ENCODE measurements at regions of chr6 and their contacts with region 1.

Region 1: DNA sequence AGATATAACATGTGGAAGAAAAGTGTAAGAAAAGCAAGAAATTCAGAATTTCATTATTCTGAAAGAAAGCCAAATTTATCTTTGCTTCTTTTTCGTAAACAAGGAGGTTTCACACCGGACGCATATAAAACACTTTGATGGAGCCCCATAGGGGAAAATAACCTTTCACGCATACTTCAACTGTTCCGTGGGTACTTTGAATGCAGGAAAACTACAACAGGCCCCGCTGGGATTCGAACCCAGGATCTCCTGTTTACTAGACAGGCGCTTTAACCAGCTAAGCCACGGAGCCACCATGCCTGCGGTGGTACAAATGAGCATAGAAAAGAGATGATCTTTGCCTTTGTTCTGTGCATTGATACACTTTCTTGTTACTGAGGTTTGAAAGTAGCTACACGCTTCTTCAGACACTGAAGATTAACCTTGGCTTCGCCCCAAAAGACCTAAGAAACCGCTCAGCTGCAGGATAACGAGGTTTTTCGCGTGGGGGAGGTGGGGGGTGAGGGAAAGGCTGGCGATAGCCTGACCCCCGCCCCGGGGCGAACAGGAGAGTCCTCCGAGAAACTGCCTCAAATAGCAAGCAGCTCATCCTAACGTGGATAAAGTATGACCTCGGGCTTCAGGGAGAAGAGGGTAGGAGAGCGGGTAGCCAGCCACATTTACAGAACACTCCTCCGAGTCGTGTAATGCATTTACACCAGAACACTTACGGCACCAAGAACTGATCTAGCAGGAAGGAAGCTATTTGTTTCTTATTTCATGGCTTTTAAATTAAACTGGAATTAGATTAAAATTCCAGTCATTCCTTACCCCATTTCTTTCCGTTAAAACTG is 5.3 kb upstream of the HMGN4 start:
- DNase-seq: peak; percentile 94
- H3K4me3 Mint-ChIP-seq: peak overlapping the region; percentile 96
- H3K27ac Mint-ChIP-seq: peak overlapping the region; percentile 82
- H3K4me1 Mint-ChIP-seq: peaks cover 21% of the 10 kb centered on the region
- H3K27me3 Mint-ChIP-seq: no peaks in the 10 kb centered on the region
- CTCF ChIP-seq: no peak

Region 2: GRCh38 chr6:26329763-26330511 is 203.0 kb before region 1 on chr6:
- CTCF ChIA-PET with region 1: no interaction called
- POLR2A ChIA-PET with region 1: interaction called, 16 read pairs
- intact Hi-C with region 1: no loop called
- DNase-seq: peak; percentile 73
- H3K4me3 Mint-ChIP-seq: peak overlapping the region; percentile 75
- H3K27ac Mint-ChIP-seq: peak overlapping the region; percentile 63
- H3K4me1 Mint-ChIP-seq: peaks cover 12% of the 10 kb centered on the region
- H3K27me3 Mint-ChIP-seq: no peaks in the 10 kb centered on the region
- CTCF ChIP-seq: no peak

Region 3: DNA sequence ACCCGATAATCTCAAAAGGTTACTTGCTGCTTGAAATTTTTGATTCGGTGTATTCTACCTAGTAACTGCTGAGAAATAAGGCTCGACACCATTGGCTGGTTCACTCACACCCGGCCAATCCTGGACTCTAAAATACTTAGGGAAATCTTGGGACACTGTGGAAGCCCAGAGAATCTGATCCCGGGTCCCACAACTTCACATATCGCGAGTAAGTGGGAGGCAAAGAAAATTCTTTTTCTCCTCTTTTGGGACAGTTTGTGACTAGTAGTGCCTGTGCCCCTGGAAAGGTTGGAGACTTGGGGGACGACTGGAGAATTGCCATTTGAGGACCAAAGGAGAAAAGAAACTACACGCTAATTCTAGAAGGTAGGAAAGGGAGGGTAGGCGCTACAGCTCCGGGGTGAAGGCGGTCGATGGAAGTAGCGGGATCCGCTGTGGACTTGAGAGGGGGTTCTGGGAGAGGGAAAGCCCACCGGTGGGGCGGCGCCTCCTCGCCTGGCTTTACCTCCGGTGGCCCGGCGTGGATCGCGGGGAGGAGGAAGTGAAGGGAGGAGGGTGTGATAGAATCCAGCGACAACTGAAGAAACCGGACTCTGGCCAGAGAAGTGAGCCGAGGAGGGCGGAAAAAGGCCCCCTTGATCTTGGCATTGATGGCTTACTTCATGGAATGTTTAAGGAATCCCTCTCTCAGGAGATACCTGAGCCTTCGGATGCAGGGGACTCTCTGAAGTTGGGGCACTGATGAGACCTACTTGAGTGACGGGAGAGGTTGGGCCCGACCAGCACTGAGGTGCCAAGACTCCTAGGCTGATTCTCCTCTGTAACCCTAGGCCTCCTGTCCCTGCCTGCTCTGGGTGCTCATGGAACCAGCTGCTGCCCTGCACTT is 111.4 kb before region 1 on chr6:
- CTCF ChIA-PET with region 1: no interaction called
- POLR2A ChIA-PET with region 1: interaction called, 3 read pairs
- intact Hi-C with region 1: loop called (anchors 5 kb)
- DNase-seq: peak; percentile 93
- H3K4me3 Mint-ChIP-seq: no peak overlapping the region
- H3K27ac Mint-ChIP-seq: no peak overlapping the region
- H3K4me1 Mint-ChIP-seq: peaks cover 29% of the 10 kb centered on the region
- H3K27me3 Mint-ChIP-seq: no peaks in the 10 kb centered on the region
- CTCF ChIP-seq: no peak

Region 4: GRCh38 chr6:26473758-26474438 is 59.0 kb before region 1 on chr6:
- CTCF ChIA-PET with region 1: no interaction called
- POLR2A ChIA-PET with region 1: interaction called, 17 read pairs
- intact Hi-C with region 1: loop called (anchors 5 kb)
- DNase-seq: peak; percentile 94
- H3K4me3 Mint-ChIP-seq: peak overlapping the region; percentile 92
- H3K27ac Mint-ChIP-seq: peak overlapping the region; percentile 99
- H3K4me1 Mint-ChIP-seq: peaks cover 21% of the 10 kb centered on the region
- H3K27me3 Mint-ChIP-seq: no peaks in the 10 kb centered on the region
- CTCF ChIP-seq: no peak

Region 5: DNA sequence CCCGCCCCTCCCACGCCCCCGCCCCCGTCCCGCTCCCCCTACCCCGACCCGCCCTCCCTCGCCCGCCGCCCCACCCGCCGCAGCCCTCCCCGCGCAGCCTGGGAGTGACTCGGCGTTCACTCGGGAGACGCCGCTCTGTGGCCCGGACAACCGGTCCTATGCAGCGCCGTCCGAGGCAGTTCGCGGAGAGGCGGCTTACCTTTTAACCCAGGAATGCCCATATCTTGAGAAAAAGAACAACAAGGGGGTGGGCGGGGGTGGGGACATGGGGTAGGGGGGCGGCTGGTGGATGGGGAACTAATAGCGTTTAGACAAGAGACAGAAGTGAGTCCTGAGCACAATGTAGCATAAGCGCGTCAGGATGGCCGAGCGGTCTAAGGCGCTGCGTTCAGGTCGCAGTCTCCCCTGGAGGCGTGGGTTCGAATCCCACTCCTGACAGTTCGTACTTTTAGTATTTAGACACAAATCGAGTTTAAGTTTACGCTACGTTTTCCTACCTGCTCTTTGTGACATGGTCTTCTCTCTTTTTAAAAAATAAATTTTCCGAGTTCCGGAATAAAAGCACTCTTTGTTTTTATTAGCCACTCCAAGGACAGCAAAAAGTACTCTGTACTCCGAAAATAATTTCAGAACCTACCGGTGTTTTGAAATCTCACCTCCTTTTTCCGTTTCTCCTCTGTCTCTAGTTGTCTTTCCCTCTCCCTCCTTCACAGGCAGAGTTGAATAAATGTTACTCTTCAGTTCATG is 11.9 kb before region 1 on chr6:
- CTCF ChIA-PET with region 1: interaction called, 4 read pairs
- POLR2A ChIA-PET with region 1: interaction called, 45 read pairs
- intact Hi-C with region 1: loop called (anchors 1 kb)
- DNase-seq: peak; percentile 82
- H3K4me3 Mint-ChIP-seq: peak overlapping the region; percentile 66
- H3K27ac Mint-ChIP-seq: peak overlapping the region; percentile 17
- H3K4me1 Mint-ChIP-seq: peaks cover 9% of the 10 kb centered on the region
- H3K27me3 Mint-ChIP-seq: no peaks in the 10 kb centered on the region
- CTCF ChIP-seq: no peak

Region 6: DNA sequence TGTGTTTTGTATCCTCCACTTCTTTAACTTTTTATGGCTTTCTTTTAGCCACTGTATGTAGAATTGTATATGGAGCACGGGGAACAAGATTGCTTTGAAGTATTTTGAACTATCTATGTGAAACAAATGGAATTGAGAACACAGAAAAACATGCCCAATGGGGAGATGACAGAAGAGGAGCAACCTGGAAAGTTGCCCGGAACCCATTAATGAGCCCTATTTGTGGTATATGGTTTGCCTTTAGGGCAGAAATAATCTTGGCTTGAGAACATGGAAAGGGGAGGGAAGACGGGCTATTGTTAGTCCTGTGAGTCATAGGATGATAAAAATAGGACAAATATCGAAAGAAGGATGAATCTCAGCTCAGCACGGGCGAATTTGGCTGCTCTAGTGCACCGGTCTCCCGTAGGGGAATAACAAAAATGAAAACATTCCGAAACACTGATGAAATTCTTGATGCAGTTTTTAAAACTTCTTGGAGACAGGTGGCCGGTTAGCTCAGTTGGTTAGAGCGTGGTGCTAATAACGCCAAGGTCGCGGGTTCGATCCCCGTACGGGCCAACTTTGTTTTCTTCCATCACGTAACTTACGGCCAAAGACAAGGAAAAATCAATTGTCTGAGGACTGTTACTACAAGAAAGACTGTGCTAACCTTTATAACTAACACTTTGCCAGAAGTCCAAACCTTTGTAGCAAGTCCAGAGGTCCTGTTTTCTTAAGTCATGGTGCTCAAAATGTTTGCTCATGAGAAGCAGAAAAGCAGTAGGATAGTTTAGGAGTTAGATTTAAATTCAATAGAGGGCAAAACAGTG is 20.9 kb after region 1 on chr6:
- CTCF ChIA-PET with region 1: interaction called, 4 read pairs
- POLR2A ChIA-PET with region 1: interaction called, 76 read pairs
- intact Hi-C with region 1: loop called (anchors 1 kb)
- DNase-seq: peak; percentile 95
- H3K4me3 Mint-ChIP-seq: no peak overlapping the region
- H3K27ac Mint-ChIP-seq: no peak overlapping the region
- H3K4me1 Mint-ChIP-seq: peaks cover 21% of the 10 kb centered on the region
- H3K27me3 Mint-ChIP-seq: no peaks in the 10 kb centered on the region
- CTCF ChIP-seq: no peak

Measured in MCF 10A (cell line).